ENCODE measurements at regions of chr6 and their contacts with region 1.

Region 1: DNA sequence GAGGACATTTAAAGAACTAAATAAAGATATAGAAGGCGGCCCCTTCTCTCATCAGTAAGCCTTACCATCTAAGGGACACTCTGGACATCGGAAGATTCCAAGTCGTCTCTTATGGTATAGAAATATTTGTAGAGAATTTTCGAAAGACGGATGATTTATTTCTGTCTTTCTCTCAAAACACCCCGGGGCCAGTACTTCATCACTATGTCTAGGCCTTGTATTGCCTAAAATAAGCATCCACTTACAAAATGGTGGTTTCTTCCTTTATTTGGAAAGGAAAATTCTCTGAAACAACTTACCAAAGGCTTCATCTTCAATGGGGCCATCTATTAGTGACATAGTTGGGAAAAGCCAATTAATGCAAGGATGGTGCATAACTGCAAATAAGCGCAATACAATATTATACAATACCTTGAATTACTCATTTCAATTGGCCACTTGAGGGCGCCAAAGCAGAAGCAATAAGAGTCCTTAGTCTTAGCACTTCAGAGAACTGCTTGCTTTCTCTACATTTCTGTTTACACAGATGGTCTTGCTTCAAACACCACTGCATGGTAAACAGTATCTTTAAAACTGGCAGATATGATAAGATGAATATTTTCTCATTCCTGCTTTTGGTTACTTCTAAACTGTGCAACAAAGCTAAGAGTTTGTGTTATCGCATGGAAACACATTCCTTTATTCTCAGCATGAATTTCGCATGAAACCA is 113.2 kb downstream of the VIP start:
- H3K4me3 ChIP-seq: no peak overlapping the region
- H3K27ac ChIP-seq: no peak overlapping the region
- H3K4me1 ChIP-seq: no peaks in the 10 kb centered on the region
- CTCF ChIP-seq: no peak

Region 2: DNA sequence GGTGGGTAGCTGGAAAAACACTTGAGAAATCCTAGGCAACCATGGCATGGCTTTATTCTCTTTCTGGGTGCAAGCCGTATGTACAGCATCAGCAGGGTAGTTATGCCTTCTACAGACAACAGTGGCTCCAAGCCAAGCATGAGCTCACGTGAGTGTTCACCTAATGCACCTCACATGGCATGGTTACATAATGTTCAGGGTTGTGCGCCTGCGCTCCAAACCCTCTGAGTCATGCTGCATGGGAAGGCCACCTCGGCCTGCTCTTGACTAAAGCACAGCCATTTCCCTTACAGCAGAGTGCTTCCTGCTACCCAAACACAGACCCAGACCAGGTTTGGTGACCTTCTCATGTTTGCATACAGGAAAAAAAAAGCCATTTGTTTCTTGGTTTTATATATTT is 16.9 kb before region 1 on chr6:
- CTCF ChIA-PET with region 1: interaction called, 12 read pairs
- POLR2A ChIA-PET with region 1: no interaction called
- H3K4me3 ChIP-seq: no peak overlapping the region
- H3K27ac ChIP-seq: no peak overlapping the region
- H3K4me1 ChIP-seq: no peaks in the 10 kb centered on the region
- CTCF ChIP-seq: no peak

Region 3: DNA sequence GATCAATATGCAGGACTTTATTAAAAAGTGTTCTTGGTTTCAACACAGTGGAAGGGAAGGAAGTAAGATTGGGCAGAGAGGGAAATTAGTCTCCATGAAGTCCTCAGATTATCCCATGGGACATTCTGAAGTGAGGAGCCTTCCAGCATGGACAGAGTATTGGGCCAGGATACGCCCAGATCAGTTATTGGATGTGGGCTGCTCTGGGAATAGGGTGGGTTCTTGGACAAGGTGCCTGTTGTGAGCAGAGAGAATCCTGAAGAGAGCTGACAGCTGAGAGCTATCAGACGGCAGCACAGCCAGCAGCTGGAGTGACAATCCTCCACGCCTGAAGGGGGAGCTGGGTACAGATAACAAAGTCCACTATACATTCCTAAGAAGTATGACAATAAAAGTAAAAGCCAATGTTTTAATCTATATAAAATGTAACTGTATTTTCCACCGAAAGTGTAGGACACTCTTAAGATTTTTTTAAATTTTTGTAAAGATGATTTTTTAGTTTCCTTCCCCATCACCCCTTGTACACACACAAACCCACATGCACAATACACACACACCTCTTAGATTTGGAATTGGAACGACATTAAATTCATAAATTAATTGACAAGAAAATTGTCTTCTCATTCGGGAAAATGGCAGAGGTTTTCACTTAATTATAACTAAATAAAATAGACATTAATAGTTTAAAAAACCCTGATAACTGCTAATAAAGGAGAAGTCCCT is 11.2 kb after region 1 on chr6:
- CTCF ChIA-PET with region 1: interaction called, 18 read pairs
- POLR2A ChIA-PET with region 1: no interaction called
- H3K4me3 ChIP-seq: no peak overlapping the region
- H3K27ac ChIP-seq: no peak overlapping the region
- H3K4me1 ChIP-seq: no peaks in the 10 kb centered on the region
- CTCF ChIP-seq: no peak

Region 4: GRCh38 chr6:152897799-152898399 is 34.1 kb after region 1 on chr6:
- CTCF ChIA-PET with region 1: interaction called, 22 read pairs
- POLR2A ChIA-PET with region 1: no interaction called
- H3K4me3 ChIP-seq: no peak overlapping the region
- H3K27ac ChIP-seq: no peak overlapping the region
- H3K4me1 ChIP-seq: no peaks in the 10 kb centered on the region
- CTCF ChIP-seq: peak; percentile 54

Region 5: GRCh38 chr6:152948150-152948768 is 84.5 kb after region 1 on chr6:
- CTCF ChIA-PET with region 1: interaction called, 140 read pairs
- POLR2A ChIA-PET with region 1: no interaction called
- H3K4me3 ChIP-seq: no peak overlapping the region
- H3K27ac ChIP-seq: no peak overlapping the region
- H3K4me1 ChIP-seq: no peaks in the 10 kb centered on the region
- CTCF ChIP-seq: peak; percentile 55